Endothelial cell of umbilical vein (primary cell): ENCODE measurements at regions of chr12 and their contacts with region 1.

Region 1: GRCh38 chr12:7970475-7971252 is 34.7 kb upstream of the SLC2A3 start:
- DNase-seq: peak; percentile 94
- H3K4me3 ChIP-seq: peak overlapping the region; percentile 5 to 41 (median 40)
- H3K27ac ChIP-seq: peak overlapping the region; percentile 60
- H3K4me1 ChIP-seq: peaks cover 17% of the 10 kb centered on the region
- H3K27me3 ChIP-seq: no peaks in the 10 kb centered on the region
- CTCF ChIP-seq: no peak
- POLR2A ChIP-seq: peak; percentile 59

Region 2: GRCh38 chr12:7959701-7960121 is 11.0 kb before region 1 on chr12:
- CTCF ChIA-PET with region 1: interaction called, 17 read pairs
- POLR2A ChIA-PET with region 1: no interaction called
- dilution Hi-C with region 1: no loop called
- intact Hi-C with region 1: no loop called
- DNase-seq: peak; percentile 3
- H3K4me3 ChIP-seq: no peak overlapping the region
- H3K27ac ChIP-seq: no peak overlapping the region
- H3K4me1 ChIP-seq: peaks cover 21% of the 10 kb centered on the region
- H3K27me3 ChIP-seq: no peaks in the 10 kb centered on the region
- CTCF ChIP-seq: no peak
- POLR2A ChIP-seq: no peak

Region 3: GRCh38 chr12:7989827-7990551 is 19.3 kb after region 1 on chr12:
- CTCF ChIA-PET with region 1: interaction called, 4 read pairs
- POLR2A ChIA-PET with region 1: interaction called, 3 read pairs
- dilution Hi-C with region 1: no loop called
- intact Hi-C with region 1: loop called (anchors 1 kb)
- DNase-seq: peak; percentile 73
- H3K4me3 ChIP-seq: no peak overlapping the region
- H3K27ac ChIP-seq: no peak overlapping the region
- H3K4me1 ChIP-seq: peaks cover 11% of the 10 kb centered on the region
- H3K27me3 ChIP-seq: no peaks in the 10 kb centered on the region
- CTCF ChIP-seq: no peak
- POLR2A ChIP-seq: no peak

Region 4: GRCh38 chr12:8026291-8026900 is 55.7 kb after region 1 on chr12:
- CTCF ChIA-PET with region 1: no interaction called
- POLR2A ChIA-PET with region 1: no interaction called
- dilution Hi-C with region 1: no loop called
- intact Hi-C with region 1: loop called (anchors 1 kb)
- DNase-seq: peak; percentile 99
- H3K4me3 ChIP-seq: peak overlapping the region; percentile 57 to 97 (median 77)
- H3K27ac ChIP-seq: peak overlapping the region; percentile 100
- H3K4me1 ChIP-seq: peaks cover 3% of the 10 kb centered on the region
- H3K27me3 ChIP-seq: no peaks in the 10 kb centered on the region
- CTCF ChIP-seq: no peak
- POLR2A ChIP-seq: peak; percentile 41